ENCODE measurements at regions of chr18 and their contacts with region 1.

Region 1: GRCh38 chr18:31942999-31943865 is at the start of gene TRAPPC8:
- DNase-seq: peak; percentile 98 to 100 (median 99)
- H3K4me3 ChIP-seq: peak within 1 kb of the TSS; percentile 64 to 99 (median 89)
- H3K27ac ChIP-seq: peak within 1 kb of the TSS; percentile 60 to 96 (median 88)
- H3K27me3 ChIP-seq: no peaks in the 10 kb centered on the region
- CTCF ChIP-seq: peak in 26 of 56 donors; percentile 3 to 38 (median 17)
- total RNA-seq, gene TRAPPC8: 37.1 to 100 (median 56.5) TPM

Region 2: DNA sequence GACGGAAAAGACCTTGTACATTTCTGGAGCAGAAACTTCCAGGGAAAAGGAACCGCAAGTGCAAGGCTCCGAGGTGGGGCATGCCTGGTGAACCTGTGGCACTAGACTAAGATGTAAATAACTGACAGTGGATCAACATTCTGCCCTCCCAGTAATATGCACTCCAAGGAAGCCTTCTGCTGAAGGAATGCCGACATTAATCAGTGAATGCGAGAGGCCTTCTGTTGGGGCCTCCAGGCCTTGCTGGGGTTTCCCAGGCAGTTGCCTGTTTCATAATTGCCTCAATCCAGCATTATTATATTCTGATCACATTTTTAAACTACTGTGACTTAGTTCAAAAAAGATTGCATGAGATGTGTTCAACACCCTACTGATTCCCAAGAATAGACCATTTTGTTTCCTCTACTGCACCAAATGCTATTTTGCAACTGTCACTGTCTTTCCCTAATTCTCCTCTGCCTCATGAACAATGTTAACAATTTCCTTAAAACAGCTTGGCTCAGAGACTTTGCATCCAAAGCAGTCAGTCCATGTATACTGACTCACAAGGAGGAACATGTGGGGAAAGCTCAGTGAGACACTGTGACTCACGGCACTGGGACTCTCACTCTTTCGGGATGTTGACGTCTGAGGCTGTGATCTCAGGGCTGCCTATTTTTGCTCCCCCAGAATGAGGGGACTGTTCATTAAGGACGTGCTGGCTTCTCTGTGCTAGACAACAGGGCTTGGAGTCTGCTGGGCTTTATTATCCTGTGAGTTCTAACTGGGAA is 455.8 kb before region 1 on chr18:
- intact Hi-C with region 1: no loop called
- DNase-seq: peak in 4 of 10 donors; percentile 10 to 54 (median 43)
- H3K4me3 ChIP-seq: no peak overlapping the region
- H3K27ac ChIP-seq: peak overlapping the region in 2 of 59 donors; percentile 6 to 38
- H3K27me3 ChIP-seq: peaks cover 0 to 18% (median 0%) of the 10 kb centered on the region in 45 donors
- CTCF ChIP-seq: no peak

Region 3: DNA sequence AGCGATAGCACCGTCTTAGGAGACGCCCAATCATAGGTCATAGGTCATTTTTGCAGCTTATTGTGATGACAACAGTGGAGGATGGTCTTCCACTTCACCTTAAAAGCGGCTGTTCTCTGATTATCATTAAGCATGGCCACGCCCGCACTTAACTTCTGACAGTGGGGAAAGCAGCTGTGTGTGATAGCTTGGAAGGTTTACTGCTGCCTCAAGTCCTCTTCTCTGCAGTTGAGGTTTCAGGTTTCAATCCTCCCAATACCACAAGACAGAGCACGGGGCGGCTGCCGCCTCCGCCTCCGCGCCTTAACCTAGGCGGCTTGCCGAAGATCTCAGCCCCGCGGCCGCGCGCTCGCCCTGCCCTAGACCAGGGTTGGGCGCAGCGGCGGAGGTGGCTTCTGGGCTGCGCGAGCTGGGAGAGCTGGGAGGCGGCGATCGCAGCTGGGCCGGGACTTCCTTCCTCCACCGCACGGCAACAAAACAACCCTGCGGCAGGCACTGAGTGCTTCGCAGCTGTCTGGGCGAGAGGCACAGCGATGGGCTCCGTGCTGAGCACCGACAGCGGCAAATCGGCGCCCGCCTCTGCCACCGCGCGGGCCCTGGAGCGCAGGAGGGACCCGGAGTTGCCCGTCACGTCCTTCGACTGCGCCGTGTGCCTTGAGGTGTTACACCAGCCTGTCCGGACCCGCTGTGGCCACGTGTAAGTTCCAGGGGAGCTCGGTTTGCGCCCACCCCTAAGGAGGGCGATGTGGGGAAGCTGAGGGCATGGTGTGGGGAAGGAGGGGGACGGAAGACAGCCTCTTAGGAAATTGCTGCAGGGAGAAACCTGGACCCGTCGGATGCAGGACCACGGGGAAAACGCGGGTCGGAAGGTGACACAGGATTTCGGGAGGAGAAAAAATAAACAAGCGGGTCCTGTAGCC is 75.4 kb after region 1 on chr18 and contains the start of gene RNF125:
- intact Hi-C with region 1: loop called in 1 of 2 experiments (anchors 1 kb)
- DNase-seq: peak; percentile 18 to 82 (median 61)
- H3K4me3 ChIP-seq: peak within 1 kb of the TSS; percentile 57 to 89 (median 74)
- H3K27ac ChIP-seq: peak within 1 kb of the TSS; percentile 49 to 96 (median 91)
- H3K27me3 ChIP-seq: no peaks in the 10 kb centered on the region
- CTCF ChIP-seq: peak in 12 of 56 donors; percentile 8 to 24 (median 14)
- total RNA-seq, gene RNF125: 0.69 to 14.6 (median 3.8) TPM